ENCODE measurements at regions of chr16 and their contacts with region 1.

Region 1: DNA sequence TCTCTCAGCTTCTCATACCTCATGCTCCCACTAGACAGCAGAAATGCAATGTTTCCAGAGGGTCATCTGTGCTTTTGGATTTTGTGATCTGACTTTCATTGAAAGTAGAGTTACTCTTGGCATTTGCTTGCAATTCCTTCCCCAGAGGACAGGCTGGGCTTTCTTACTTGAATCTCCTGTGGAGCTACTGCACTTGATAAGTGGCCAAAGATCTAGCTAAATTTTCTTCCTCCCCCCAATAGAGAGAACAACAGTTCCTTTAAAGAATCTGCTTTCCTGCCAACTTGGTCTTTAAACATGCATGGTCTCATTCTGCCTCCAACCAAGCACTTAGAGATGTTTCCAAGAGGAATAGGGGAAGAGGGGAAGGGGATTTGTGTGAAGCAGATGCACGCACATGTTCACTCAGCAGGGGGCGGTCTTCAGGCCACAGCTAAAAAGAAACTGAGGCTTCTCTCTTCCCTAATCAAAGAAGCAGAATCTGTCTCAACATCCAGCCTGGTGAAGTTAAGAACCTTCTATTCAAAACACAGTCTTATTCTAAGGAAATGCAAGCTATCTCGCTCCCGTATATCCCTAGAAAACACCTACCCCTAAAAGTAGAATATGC is 229.6 kb downstream of the ZFHX3 start:
- DNase-seq: peak; percentile 5 to 57
- H3K4me3 ChIP-seq: no peak overlapping the region
- H3K27ac ChIP-seq: no peak overlapping the region
- H3K4me1 ChIP-seq: no peaks in the 10 kb centered on the region
- H3K27me3 ChIP-seq: no peaks in the 10 kb centered on the region
- CTCF ChIP-seq: peak; percentile 37 to 62 (median 53)
- EP300 ChIP-seq: no peak
- POLR2A ChIP-seq: no peak
- RAD21 ChIP-seq: peak; percentile 30 to 44; a peak in 3 of 4 replicates

Region 2: GRCh38 chr16:72800524-72801161 is 17.7 kb before region 1 on chr16:
- CTCF ChIA-PET with region 1: interaction called, 10 read pairs
- POLR2A ChIA-PET with region 1: interaction called, 3 read pairs
- DNase-seq: no peak
- H3K4me3 ChIP-seq: no peak overlapping the region
- H3K27ac ChIP-seq: no peak overlapping the region
- H3K4me1 ChIP-seq: no peaks in the 10 kb centered on the region
- H3K27me3 ChIP-seq: no peaks in the 10 kb centered on the region
- CTCF ChIP-seq: no peak
- EP300 ChIP-seq: no peak
- POLR2A ChIP-seq: no peak
- RAD21 ChIP-seq: no peak

Region 3: GRCh38 chr16:72807245-72807644 is 11.1 kb before region 1 on chr16:
- CTCF ChIA-PET with region 1: interaction called, 10 read pairs
- POLR2A ChIA-PET with region 1: no interaction called
- DNase-seq: no peak
- H3K4me3 ChIP-seq: no peak overlapping the region
- H3K27ac ChIP-seq: no peak overlapping the region
- H3K4me1 ChIP-seq: peaks cover 0 to 5% (median 2%) of the 10 kb centered on the region in 4 experiments; a peak in 3 of 7 replicates
- H3K27me3 ChIP-seq: no peaks in the 10 kb centered on the region
- CTCF ChIP-seq: no peak
- EP300 ChIP-seq: no peak
- POLR2A ChIP-seq: no peak
- RAD21 ChIP-seq: no peak